HEK293 (cell line): ENCODE measurements at regions of chr1 and their contacts with region 1.

Region 1: DNA sequence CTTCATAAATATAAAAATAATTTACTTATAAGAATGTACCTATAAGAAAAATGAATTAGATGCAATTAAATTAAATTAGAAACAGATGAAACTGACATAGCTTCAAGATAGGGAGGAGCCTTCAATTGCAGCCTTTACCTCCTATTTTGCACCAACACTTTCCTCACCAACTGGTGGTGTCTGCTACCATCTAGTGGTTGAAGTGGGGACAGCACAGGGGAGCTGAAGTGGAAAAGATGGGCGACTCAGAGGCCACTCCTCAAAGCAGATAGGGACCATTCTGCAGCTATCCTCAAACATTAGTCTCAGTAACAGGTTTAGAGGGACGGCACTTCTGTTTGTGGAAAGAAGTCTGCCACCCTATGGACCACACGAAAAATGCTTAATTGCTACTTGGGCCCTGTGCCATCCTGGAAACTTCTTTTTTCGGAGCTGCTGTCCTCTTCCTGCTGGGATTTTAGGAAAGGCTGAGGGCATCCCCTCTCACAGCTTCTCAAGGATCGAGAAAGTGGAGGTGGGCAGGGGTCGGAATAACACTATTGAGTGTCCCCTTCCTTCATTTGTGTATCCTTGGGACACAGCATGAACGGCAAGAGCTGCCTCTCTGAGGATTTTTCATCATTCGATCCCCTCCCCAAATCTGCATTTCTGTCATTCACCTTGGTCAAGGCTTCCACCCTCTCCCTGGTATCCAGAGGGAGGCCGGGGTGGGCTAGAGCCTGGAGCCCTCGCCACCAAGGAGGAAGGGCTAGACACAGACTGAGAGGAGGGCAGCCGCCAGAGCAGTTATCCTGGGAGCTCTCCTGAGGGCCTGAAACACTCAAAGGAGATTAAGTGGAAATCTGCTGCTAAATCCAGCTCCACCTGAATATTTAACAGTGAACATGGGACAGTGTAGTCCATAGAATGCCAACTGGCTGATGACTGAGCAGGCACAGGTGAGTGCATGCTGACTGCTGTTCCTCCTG is 9.6 kb downstream of the PROK1 start:
- H3K4me3 ChIP-seq: no peak overlapping the region
- H3K27ac ChIP-seq: no peak overlapping the region
- H3K4me1 ChIP-seq: no peaks in the 10 kb centered on the region
- CTCF ChIP-seq: peak; percentile 81

Region 2: GRCh38 chr1:110106013-110106941 is 354.3 kb before region 1 on chr1:
- CTCF ChIA-PET with region 1: interaction called, 17 read pairs
- POLR2A ChIA-PET with region 1: no interaction called
- H3K4me3 ChIP-seq: no peak overlapping the region
- H3K27ac ChIP-seq: no peak overlapping the region
- H3K4me1 ChIP-seq: no peaks in the 10 kb centered on the region
- CTCF ChIP-seq: peak; percentile 87

Region 3: DNA sequence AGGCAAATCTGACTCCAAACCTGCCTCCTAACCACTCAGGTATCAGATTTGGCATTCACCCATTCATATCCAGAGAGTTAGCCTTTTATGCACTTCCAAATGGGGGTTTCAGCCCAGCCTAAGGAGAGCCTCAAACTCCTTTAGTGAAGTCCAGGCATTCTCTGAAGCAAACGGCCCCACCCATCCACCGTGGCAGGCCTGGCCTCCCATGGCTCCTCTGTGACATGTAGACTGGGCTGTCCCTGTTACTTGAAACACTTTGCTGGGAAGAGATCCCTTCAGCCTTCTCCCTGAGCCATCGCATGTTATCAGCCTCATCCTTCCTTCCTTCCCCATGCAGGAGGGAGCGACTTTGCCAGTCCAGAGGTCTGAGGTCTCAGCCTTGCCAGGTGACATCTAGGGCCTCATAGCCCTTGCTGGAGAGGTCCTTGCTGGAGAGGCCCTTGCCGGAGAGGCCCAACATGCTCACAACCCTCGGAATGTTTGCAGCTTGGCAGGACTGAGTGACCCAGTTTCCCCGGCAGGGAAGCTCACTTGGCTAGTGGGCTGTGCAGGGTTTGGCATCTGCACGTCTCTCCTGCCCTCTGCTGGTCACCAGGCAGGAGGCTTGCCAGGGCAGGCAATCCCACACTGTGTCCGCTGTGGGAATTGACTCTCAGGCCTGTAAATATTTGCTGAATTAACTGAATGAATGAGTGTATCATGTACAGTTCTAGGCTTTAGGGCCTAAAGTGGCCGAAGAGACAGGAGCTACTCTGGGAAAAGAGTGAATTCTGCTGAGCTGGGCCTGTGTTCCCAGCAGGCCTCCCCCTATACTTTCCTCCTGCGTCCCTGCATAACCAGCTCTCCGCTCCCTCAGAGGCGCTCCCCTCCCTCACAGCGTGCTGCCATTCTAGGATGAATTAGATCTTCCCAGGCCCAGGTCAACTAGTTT is 148.1 kb before region 1 on chr1:
- CTCF ChIA-PET with region 1: interaction called, 19 read pairs
- POLR2A ChIA-PET with region 1: no interaction called
- H3K4me3 ChIP-seq: no peak overlapping the region
- H3K27ac ChIP-seq: no peak overlapping the region
- H3K4me1 ChIP-seq: no peaks in the 10 kb centered on the region
- CTCF ChIP-seq: peak; percentile 93

Region 4: DNA sequence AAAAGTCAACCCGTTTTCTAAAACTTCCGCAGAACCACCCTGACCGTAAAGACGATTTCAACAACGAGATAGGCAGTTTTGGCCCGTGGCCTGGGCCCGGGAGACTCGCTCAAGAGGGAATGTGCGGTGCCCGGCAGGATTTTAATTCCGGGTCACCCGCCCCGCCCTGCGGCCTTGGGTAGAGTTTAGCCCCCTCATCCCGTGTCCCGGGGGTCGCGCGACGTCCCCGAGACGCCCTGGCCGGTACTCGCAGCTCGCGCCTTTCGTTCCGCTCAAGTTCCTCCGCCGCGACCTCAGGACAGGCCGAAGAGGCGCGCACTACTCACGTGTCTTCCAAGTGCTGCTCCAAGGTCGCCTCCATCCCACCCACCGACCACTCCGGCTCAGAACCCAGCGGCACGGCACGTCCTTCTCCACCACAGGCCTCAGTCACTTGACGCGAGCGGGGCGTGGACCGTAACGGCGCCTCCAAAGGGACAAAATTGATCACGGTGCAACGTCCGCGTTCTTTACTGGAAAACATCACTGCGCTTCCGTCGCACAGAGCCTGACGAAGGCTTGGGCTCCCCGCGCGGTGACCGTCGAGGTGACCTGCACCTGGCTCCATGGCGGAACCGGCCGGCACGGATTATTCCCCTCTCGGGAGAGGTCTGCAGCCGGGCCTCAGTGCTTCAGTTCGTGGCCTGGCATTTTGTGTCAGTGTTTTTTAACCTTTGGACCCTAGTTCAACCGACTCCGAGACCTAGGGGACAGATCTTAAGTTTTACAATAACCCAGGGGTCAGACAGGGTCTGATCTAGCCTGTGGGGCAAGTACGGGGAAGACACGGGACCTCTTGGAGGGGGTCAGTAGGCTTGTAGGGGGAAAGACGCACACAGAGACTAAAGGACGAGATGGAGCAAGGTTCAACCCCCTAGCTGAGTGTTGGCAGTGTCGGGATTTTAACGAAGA is 53.0 kb before region 1 on chr1 and contains the start of gene LAMTOR5:
- CTCF ChIA-PET with region 1: interaction called, 305 read pairs
- POLR2A ChIA-PET with region 1: no interaction called
- H3K4me3 ChIP-seq: peak within 1 kb of the TSS; percentile 98
- H3K27ac ChIP-seq: peak within 1 kb of the TSS; percentile 68
- H3K4me1 ChIP-seq: no peaks in the 10 kb centered on the region
- CTCF ChIP-seq: peak; percentile 57; the same call in 1 of the 2 replicates

Region 5: DNA sequence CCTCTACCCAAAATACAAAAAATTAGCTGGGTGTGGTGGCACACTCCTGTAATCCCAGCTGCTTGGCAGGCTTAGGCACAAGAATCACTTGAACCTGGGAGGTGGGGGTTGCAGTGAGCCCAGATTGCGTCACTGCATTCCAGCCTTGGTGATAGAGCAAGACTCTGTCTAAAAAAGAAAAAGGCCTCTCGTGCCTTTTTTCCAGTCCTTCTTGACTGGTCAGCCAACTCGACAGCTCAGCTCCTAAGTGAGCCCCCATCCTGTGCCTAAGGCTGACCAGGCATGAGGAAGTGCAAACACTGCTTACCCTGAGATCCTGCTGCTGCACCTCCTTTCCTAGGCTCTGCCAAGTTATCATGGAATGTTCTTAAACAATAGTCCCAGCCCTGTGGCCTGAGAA is 19.7 kb before region 1 on chr1:
- CTCF ChIA-PET with region 1: interaction called, 20 read pairs
- POLR2A ChIA-PET with region 1: interaction called, 3 read pairs
- H3K4me3 ChIP-seq: no peak overlapping the region
- H3K27ac ChIP-seq: no peak overlapping the region
- H3K4me1 ChIP-seq: no peaks in the 10 kb centered on the region
- CTCF ChIP-seq: no peak

Region 6: DNA sequence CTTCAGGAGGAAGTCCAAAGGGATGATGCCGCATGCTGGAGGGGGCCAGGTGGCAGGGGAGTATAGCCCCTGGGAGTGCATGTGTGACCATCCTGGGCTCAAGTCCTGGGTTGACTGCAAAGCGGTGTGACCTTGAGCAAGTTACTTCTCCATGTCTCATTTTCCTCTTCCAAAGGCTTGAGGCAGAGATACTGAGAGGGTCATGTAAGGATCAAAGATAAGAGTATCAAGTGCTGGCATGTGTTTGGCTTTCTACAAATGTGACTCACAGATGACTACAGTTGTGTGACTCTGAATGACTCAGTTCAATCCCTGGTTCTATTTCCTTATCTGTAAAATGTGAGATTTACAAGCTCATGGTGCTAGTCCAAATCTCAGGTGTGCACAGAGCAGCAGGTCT is 16.5 kb after region 1 on chr1:
- CTCF ChIA-PET with region 1: interaction called, 15 read pairs
- POLR2A ChIA-PET with region 1: no interaction called
- H3K4me3 ChIP-seq: no peak overlapping the region
- H3K27ac ChIP-seq: no peak overlapping the region
- H3K4me1 ChIP-seq: peaks cover 12% of the 10 kb centered on the region; the same call in 1 of the 2 replicates
- CTCF ChIP-seq: no peak

Region 7: DNA sequence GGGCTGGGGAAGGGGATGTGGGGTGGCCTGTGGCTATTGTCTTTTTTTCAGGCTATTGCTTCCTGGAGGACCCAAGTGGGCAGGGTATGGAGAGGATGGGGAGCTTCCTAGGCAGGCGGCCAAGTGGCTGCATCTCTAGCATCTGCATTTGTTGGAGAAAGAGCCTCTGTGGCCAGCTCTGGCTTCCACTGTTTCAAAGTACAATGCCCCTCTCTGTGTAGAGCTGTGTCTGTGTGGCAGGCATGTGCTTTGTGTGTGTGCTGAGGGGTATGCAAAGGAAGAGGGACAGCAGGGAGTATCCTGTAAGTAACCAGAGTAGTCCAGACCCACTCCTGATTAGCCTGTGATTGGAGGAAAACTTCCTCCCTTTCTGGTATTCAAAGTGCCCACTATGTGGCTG is 105.0 kb after region 1 on chr1:
- CTCF ChIA-PET with region 1: no interaction called
- POLR2A ChIA-PET with region 1: no interaction called
- H3K4me3 ChIP-seq: no peak overlapping the region
- H3K27ac ChIP-seq: no peak overlapping the region
- H3K4me1 ChIP-seq: no peaks in the 10 kb centered on the region
- CTCF ChIP-seq: no peak